ENCODE measurements at regions of chr9 and their contacts with region 1.

Region 1: DNA sequence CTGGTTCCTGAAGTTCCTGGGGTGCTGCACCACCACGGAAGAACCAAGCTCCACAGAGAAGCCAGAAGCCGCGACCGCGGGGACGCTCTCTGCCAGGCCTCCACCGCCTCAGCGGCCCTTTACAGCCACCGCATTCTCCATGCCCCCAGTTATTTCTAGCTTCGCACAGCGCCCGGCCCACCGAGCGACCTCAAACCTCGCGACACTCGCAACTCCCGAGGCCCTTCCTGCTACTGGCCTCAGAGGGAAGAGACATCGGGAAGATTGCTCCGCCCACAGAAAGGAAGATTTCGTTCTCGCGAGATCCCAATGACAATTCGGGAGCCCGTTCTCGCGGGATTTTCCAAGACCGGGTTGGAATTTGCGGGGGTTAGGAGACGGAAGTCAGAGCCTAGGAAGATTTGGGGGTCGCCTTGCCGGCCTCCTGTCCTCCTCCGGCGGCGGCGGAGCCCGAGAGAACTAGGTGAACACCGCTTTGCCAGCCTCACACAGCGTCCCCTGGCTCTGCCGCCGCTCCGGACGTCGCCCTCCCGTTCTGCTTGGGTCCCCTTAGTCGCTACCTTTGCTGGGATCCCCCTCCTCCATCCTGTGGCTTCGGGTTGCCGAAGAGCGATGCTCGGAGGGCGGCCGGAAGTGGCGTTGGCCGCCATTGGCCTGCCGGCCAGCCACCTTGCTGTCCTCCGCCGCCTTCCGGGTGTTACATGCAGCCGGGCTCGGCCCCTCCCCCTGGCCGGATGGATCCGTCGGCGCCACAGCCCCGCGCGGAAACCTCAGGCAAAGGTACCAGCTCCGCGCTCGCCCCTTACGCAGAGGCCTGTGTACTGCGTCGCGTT is at the start of gene ERCC6L2:
- DNase-seq: peak; percentile 93
- ATAC-seq: peak; percentile 96
- H3K4me3 ChIP-seq: no peak within 1 kb of the TSS
- H3K27ac ChIP-seq: no peak within 1 kb of the TSS; the same call in 1 of the 2 replicates
- H3K4me1 ChIP-seq: peaks cover 18% of the 10 kb centered on the region
- H3K27me3 ChIP-seq: no peaks in the 10 kb centered on the region
- CTCF ChIP-seq: no peak
- total RNA-seq, gene ERCC6L2: 39.7 TPM

Region 2: GRCh38 chr9:95297316-95297715 is 578.2 kb before region 1 on chr9:
- CTCF ChIA-PET with region 1: no interaction called
- POLR2A ChIA-PET with region 1: interaction called, 11 read pairs
- in situ Hi-C with region 1: no loop called
- intact Hi-C with region 1: no loop called
- DNase-seq: no peak
- ATAC-seq: no peak
- H3K4me3 ChIP-seq: no peak overlapping the region
- H3K27ac ChIP-seq: no peak overlapping the region
- H3K4me1 ChIP-seq: no peaks in the 10 kb centered on the region
- H3K27me3 ChIP-seq: no peaks in the 10 kb centered on the region
- CTCF ChIP-seq: no peak